Activated CD8-positive, alpha-beta T cell treated with anti-CD3 and anti-CD28 coated beads, Interleukin-2, amount 10 ng/mL, durations not matched to agents 7 days and 5 days (primary cell): ENCODE measurements at regions of chr6 and their contacts with region 1.

Region 1: DNA sequence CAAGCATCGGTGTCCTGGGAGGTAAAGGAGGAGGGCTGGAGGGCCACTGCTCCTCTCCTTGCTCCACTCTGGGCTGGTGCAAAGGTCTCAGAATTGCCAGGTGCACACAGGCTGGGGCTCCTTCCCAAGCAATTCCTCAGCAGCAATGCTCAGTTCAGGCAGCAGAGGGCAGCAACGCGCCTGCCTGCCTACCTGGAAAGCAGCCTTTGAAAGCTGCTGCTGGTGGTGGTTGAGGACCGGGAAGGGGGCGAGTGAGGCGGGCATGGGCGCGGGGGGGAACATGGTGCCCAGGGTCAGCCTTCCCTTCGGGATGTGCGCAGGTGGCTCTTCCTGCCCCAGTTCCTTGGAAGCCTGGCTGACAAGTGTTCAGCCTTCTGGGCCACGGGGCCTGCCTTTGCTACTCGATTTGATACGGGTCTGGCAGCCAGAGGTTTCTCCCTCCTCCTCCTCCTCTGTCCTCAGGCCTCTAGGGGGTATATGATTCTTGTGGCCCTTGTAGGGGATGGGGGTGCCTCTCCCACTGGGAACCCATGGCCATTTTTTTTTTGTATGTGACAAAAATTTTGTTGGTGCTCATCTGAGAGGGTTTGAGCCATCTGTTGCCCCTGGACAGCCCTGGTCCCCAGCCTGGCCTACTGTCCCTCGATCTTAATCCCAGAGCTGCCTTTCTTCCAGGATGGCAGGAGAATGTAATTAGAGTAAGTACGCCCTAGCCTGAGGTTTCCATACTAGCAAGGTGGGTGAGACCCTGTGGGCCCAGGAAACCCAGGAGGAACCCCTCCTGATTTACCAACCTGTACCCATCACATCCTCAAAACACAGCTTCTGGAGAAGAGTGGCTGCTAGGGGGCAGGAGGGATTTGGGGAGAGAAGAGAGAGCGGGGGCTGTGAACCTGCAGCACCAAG is 20.1 kb downstream of the MRPS18A start:
- DNase-seq: peak; percentile 87
- ATAC-seq: peak; percentile 76
- H3K4me3 Mint-ChIP-seq: peak overlapping the region; percentile 28
- H3K27ac Mint-ChIP-seq: peak overlapping the region; percentile 86
- H3K4me1 Mint-ChIP-seq: peaks cover 49% of the 10 kb centered on the region
- H3K27me3 Mint-ChIP-seq: no peaks in the 10 kb centered on the region

Region 2: GRCh38 chr6:43635387-43636307 is 31.9 kb before region 1 on chr6 and contains the start of gene MAD2L1BP:
- CTCF ChIA-PET with region 1: interaction called, 15 read pairs
- POLR2A ChIA-PET with region 1: interaction called, 6 read pairs
- DNase-seq: peak; percentile 90
- ATAC-seq: peak; percentile 86
- H3K4me3 Mint-ChIP-seq: peak within 1 kb of the TSS; percentile 94
- H3K27ac Mint-ChIP-seq: peak within 1 kb of the TSS; percentile 93
- H3K4me1 Mint-ChIP-seq: peaks cover 48% of the 10 kb centered on the region
- H3K27me3 Mint-ChIP-seq: no peaks in the 10 kb centered on the region
- total RNA-seq, gene MAD2L1BP: 44.2 to 44.6 TPM

Region 3: DNA sequence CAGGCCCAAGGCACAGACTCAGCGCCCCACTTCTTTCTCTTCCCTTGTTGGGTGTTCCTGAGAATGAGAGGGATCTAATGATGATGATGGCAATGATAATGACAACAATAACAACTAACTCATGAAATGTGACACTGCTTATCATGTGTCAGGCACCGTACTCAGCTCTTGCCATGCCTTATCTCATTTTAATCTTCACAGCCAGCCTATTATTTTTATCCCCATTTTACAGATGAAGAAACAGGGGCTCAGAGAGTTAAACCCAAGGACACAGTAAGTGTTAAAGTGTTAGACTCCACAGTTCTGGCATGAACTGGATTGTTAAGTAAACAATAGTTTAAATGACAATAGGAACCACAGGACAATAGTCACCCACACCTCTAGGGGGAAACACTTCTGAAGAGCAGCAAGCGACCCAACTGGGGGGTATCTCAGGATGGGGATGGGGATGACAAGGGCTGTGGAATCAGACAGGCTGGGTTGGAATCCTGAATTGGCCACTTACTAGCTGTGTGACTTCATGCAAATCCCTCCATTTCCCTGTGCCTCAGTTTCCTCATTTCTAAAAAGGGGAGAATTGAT is 10.2 kb before region 1 on chr6:
- CTCF ChIA-PET with region 1: interaction called, 26 read pairs
- POLR2A ChIA-PET with region 1: no interaction called
- DNase-seq: no peak
- ATAC-seq: no peak
- H3K4me3 Mint-ChIP-seq: no peak overlapping the region
- H3K27ac Mint-ChIP-seq: no peak overlapping the region
- H3K4me1 Mint-ChIP-seq: peaks cover 16% of the 10 kb centered on the region
- H3K27me3 Mint-ChIP-seq: peaks cover 2% of the 10 kb centered on the region

Region 4: GRCh38 chr6:43723737-43724295 is 56.3 kb after region 1 on chr6:
- CTCF ChIA-PET with region 1: interaction called, 17 read pairs
- POLR2A ChIA-PET with region 1: no interaction called
- DNase-seq: peak; percentile 83
- ATAC-seq: peak; percentile 83
- H3K4me3 Mint-ChIP-seq: no peak overlapping the region
- H3K27ac Mint-ChIP-seq: no peak overlapping the region
- H3K4me1 Mint-ChIP-seq: peaks cover 30% of the 10 kb centered on the region
- H3K27me3 Mint-ChIP-seq: peaks cover 18% of the 10 kb centered on the region

Region 5: GRCh38 chr6:43774776-43775534 is 107.5 kb after region 1 on chr6:
- CTCF ChIA-PET with region 1: interaction called, 64 read pairs
- POLR2A ChIA-PET with region 1: interaction called, 3 read pairs
- DNase-seq: peak; percentile 75
- ATAC-seq: no peak
- H3K4me3 Mint-ChIP-seq: no peak overlapping the region
- H3K27ac Mint-ChIP-seq: no peak overlapping the region
- H3K4me1 Mint-ChIP-seq: peaks cover 50% of the 10 kb centered on the region
- H3K27me3 Mint-ChIP-seq: no peaks in the 10 kb centered on the region

Region 6: DNA sequence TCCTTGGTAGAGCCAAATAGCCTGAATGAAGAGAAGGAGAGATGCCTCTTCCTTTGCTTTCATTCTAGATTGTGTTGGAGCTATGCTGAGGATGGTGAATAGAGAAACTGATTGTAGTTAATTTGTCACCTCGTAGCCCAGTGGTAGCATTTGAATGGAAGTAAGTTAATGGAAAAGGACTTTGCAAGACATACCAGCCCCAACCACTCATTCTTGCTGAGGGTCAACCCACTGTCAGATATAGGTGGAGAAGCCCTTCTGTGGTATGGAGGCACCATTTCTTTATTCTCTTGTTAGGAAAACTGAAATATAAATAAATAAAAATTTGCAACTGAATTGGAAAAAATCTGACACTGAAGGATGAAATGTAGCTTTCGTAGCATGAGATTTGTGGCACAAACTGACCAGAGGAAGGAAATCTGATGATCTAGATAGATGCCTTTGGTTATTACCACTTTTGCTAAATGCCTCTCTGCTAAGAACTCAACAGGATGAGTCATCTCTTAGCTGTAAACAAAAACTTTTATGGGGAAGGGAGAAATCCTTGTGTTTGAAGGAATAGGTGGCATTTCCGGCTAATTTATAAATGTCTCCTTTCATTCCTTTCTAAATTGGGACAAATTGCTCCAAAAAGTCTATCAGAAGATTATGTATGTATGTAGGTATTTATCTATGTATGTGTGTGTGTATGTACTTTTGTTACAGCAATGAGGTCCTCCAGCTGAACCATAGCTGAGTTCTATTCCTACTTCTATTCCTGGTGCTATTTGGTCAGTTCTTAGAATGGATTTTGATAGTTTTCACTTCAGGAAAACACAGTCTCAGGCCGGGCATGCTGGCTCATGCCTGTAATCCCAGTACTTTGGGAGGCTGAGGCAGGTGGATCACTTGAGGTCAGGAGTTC is 1786.8 kb after region 1 on chr6:
- CTCF ChIA-PET with region 1: no interaction called
- POLR2A ChIA-PET with region 1: no interaction called
- DNase-seq: no peak
- ATAC-seq: no peak
- H3K4me3 Mint-ChIP-seq: no peak overlapping the region
- H3K27ac Mint-ChIP-seq: no peak overlapping the region
- H3K4me1 Mint-ChIP-seq: peaks cover 30% of the 10 kb centered on the region
- H3K27me3 Mint-ChIP-seq: no peaks in the 10 kb centered on the region